GM10248 (cell line): ENCODE measurements at regions of chr4 and their contacts with region 1.

Region 1: GRCh38 chr4:83252782-83253405 is 31.7 kb downstream of the COQ2 start:
- DNase-seq: peak; percentile 66
- CTCF ChIP-seq: peak; percentile 81

Region 2: DNA sequence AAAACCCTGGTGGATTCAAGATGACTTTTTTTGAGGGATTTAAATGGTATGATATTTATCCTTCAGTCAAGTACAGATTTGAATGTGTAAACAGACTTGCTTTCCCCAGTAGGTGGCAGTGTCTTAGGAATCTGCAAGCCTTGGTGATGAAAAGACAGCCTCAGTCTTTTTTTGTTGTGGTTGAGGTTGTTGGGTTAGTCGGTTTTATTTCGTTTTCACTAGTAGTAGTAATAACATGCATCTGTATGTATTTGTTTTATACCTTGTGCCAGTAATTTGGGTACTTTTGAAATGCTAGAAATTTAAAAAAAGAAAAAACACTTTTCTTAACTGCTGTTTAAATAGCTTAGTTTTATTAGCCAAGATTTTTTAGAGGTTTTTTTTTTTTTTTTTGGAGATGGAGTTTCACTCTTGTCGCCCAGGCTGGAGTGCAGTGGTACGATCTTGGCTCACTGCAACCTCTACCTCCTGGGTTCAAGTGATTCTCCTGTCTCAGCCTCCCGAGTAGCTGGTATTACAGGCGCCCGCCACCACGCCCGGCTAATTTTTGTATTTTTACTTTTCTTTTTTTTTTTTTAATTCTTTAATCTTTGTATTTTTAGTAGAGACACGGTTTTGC is 178.7 kb before region 1 on chr4:
- CTCF ChIA-PET with region 1: interaction called, 15 read pairs
- POLR2A ChIA-PET with region 1: no interaction called
- DNase-seq: peak; percentile 80
- CTCF ChIP-seq: peak; percentile 61

Region 3: DNA sequence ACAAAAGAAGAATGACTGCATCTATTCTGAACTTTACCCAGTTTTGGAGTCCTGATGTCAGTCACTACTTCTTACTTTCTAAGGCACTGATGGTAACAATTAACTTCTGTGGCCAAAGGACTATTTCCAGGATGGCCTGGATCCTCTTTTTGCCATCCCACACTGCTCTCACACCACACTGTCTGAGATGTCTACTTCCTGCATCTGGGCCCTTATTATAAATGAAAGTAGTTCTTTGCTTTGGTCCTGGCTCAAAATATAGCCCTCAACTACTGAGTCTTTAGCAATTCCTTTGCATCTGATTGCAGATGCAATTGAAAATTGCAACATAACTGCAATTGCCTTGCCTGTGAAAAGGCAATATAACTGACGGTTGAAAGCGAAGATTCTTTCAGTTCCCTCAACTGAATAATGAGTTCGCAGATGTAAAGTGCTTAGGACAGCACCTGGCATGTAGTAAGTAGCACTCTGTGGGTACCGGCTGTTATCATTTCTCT is 12.5 kb before region 1 on chr4:
- CTCF ChIA-PET with region 1: interaction called, 16 read pairs
- POLR2A ChIA-PET with region 1: no interaction called
- DNase-seq: peak; percentile 60
- CTCF ChIP-seq: no peak

Region 4: GRCh38 chr4:83267121-83267829 is 14.4 kb after region 1 on chr4:
- CTCF ChIA-PET with region 1: interaction called, 24 read pairs
- POLR2A ChIA-PET with region 1: no interaction called
- DNase-seq: no peak
- CTCF ChIP-seq: no peak

Region 5: GRCh38 chr4:83276299-83277040 is 23.6 kb after region 1 on chr4:
- CTCF ChIA-PET with region 1: interaction called, 11 read pairs
- POLR2A ChIA-PET with region 1: no interaction called
- DNase-seq: no peak
- CTCF ChIP-seq: no peak